Caco-2 (cell line): ENCODE measurements at regions of chr3 and their contacts with region 1.

Region 1: DNA sequence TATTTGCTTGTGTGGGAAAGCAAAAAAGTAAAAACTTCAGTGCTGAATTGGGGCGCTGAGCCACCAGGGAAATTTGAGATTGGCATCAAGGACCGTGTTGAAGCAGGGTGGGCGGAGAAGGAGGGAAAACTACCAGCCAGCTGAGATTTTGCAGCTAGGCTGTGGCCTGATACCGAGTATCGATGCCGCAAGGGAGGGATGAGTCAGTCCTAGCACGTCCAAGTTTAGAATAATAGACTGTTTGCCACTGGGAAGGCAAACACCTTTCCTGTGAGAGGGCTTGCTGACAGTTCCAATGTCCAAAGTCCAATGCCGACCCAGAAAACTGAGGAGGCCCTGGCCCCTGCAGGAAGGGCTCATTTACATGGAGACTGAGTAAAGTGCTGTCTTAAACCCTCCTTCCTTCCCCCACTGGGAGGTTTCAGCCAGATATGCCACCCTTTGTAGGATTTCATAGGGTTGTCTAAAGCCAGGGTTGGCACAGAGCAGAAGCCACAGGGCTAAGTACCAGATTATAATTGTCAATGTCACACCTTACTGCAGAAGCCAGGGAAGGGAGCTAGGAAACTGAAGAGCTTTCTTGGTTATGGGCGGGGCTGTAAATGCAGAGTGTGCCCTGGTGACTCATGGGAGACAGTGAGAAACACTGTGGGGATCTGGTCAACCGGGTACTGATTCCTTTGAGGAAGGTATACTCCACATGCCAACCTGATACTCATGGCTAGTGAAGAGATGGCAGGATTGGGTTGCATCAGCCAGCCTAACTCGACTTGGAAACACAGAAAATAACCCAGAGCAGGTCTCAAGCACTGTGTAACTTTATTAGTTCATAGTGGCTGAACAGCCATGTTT is 28.4 kb upstream of the PIK3CB start:
- DNase-seq: peak; percentile 89 to 93
- H3K4me3 ChIP-seq: no peak overlapping the region; the same call in 1 of the 2 replicates
- H3K4me3 Mint-ChIP-seq: peak overlapping the region; percentile 67
- H3K27ac Mint-ChIP-seq: peak overlapping the region; percentile 97
- H3K4me1 ChIP-seq: peaks cover 27% of the 10 kb centered on the region
- H3K4me1 Mint-ChIP-seq: peaks cover 25% of the 10 kb centered on the region
- H3K27me3 ChIP-seq: no peaks in the 10 kb centered on the region
- H3K27me3 Mint-ChIP-seq: no peaks in the 10 kb centered on the region
- CTCF ChIP-seq: no peak

Region 2: DNA sequence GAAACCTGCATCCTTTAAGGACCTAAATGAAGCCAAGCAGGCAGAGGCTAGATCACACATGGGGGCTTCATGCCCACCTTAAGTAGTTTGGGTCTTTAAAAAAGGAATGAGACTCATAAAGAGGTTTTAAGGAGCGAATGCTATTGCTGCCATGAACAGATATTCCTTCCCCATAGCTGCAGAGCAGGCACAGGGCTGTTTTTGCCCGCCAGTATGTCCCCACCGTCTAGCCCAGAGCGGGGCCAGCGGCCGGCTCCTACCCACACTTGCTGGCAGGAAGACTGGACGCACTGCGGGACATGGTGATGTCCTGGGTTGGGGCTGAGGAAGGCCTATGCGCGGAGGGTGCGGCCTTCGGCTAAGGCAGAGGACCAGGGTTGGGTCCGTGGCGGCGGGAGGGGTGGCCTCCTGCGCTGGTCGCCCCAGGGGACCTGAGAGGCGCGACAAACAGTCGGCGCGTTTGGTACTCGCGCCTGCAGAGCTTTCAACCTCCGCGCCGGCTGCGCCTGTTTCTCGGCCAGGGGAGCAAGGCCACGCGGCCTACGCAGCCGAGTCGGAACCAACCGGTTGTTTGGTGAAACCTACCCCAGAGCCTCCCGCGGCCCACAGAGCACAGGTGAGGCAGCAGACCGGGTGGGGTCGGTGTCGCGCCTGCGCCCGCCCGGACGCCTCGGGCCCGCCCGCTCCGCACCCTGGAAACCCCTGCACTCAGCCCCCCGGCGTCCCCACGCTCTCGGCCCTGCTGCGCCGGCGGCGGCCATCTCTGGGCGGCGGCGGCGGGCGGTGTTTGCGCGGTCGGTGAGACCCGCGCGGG is 254.6 kb before region 1 on chr3 and contains the start of gene FAIM:
- CTCF ChIA-PET with region 1: no interaction called
- POLR2A ChIA-PET with region 1: no interaction called
- intact Hi-C with region 1: loop called (anchors 2 kb)
- DNase-seq: peak; percentile 78 to 82
- H3K4me3 ChIP-seq: peak within 1 kb of the TSS; percentile 77
- H3K4me3 Mint-ChIP-seq: peak within 1 kb of the TSS; percentile 91
- H3K27ac Mint-ChIP-seq: peak within 1 kb of the TSS; percentile 94
- H3K4me1 ChIP-seq: no peaks in the 10 kb centered on the region; the same call in 1 of the 2 replicates
- H3K4me1 Mint-ChIP-seq: peaks cover 15% of the 10 kb centered on the region
- H3K27me3 ChIP-seq: no peaks in the 10 kb centered on the region
- H3K27me3 Mint-ChIP-seq: peaks cover 4% of the 10 kb centered on the region
- CTCF ChIP-seq: no peak
- total RNA-seq, gene FAIM: 19.4 and 22.5 TPM in 2 replicates

Region 3: DNA sequence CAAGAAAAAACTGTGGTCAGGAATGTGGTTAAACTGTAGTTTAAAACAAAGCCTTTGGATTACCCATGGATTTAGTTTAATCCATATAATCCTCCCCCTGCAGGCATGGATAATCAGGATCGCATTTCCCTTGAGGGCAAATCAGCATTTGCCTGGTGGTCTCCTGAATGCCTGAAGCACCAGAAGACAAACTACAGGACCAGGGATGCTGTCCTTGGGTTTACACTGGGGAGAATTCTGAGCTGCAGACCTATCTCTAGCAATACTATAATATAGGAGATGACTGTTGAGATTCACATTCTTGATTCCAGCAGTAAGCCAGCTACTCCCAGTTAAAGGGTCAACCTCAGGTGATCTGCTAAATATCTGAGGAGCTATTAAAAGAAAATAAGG is 39.0 kb before region 1 on chr3:
- CTCF ChIA-PET with region 1: interaction called, 3 read pairs
- POLR2A ChIA-PET with region 1: interaction called, 7 read pairs
- intact Hi-C with region 1: loop called (anchors 5 kb)
- DNase-seq: peak; percentile 37 to 47
- H3K4me3 ChIP-seq: no peak overlapping the region
- H3K4me3 Mint-ChIP-seq: no peak overlapping the region
- H3K27ac Mint-ChIP-seq: peak overlapping the region; percentile 81
- H3K4me1 ChIP-seq: peaks cover 27% of the 10 kb centered on the region
- H3K4me1 Mint-ChIP-seq: peaks cover 10% of the 10 kb centered on the region
- H3K27me3 ChIP-seq: no peaks in the 10 kb centered on the region
- H3K27me3 Mint-ChIP-seq: no peaks in the 10 kb centered on the region
- CTCF ChIP-seq: no peak

Region 4: DNA sequence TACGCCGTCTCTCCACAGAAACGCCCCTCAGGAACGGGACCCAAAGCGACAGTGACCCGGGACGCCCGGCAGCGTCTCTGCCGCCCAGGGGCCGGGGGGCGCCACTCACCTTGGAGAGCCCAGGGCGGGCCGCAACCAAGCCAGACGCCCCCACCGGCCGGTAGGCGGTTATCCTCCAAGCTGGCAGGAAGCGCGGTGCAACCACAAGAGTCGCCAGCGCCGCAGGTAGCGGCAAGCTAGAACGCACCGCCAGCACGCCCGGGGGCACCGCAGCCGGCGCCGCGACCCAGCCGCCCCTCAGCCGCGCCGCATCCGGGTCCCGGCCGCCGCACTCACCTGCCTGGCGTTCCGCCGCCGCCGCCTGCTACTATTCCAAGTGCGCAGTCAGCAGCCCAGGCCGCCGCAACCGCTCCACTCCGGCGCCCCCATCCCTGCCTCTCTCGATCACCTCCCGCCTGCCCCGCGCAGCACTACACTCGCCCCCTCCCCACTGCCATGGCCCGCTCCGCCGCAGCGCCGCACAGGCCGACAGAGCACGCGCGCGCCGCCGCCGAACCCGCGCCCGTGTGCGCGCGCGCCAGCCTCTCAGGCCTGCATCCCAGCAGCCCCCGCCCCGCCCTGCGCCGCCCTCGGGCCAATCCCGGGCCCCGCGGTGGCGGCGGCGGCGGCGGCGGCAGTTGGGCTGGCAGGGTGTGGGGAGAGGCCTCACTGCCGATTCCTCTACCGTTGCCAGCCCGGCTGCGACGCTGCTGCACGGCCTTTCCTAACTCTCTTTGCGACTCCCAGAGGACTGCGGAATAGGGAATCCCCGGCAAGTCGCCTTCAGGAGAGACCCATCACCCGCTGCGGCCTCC is 28.6 kb before region 1 on chr3 and contains the start of gene PIK3CB:
- CTCF ChIA-PET with region 1: interaction called, 4 read pairs
- POLR2A ChIA-PET with region 1: interaction called, 4 read pairs
- intact Hi-C with region 1: loop called (anchors 1 kb)
- DNase-seq: peak; percentile 88 to 95
- H3K4me3 ChIP-seq: peak within 1 kb of the TSS; percentile 87
- H3K4me3 Mint-ChIP-seq: peak within 1 kb of the TSS; percentile 86
- H3K27ac Mint-ChIP-seq: peak within 1 kb of the TSS; percentile 92
- H3K4me1 ChIP-seq: peaks cover 7% of the 10 kb centered on the region; the same call in 1 of the 2 replicates
- H3K4me1 Mint-ChIP-seq: peaks cover 4% of the 10 kb centered on the region
- H3K27me3 ChIP-seq: no peaks in the 10 kb centered on the region
- H3K27me3 Mint-ChIP-seq: no peaks in the 10 kb centered on the region
- CTCF ChIP-seq: peak in 1 of 2 experiments; percentile 69
- total RNA-seq, gene PIK3CB: 29.7 and 31.5 TPM in 2 replicates

Region 5: DNA sequence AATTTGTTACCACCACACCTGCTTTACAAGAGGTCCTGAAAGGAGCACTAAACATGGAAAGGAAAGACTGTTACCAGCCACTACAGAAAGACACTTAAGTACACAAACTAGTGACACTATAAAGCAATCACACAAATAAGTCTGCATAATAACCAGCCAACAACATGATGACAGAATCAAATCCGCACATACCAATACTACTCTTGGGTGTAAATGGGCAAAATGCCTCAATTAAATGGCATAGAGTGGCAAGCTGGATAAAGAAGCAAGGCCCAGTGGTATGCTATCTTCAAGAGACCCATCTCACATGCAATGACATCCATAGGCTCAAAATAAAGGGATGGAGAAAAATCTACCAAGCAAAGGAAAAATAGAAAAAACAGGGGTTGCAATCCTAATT is 288.4 kb after region 1 on chr3:
- CTCF ChIA-PET with region 1: no interaction called
- POLR2A ChIA-PET with region 1: no interaction called
- intact Hi-C with region 1: no loop called
- DNase-seq: no peak
- H3K4me3 ChIP-seq: no peak overlapping the region
- H3K4me3 Mint-ChIP-seq: no peak overlapping the region
- H3K27ac Mint-ChIP-seq: no peak overlapping the region
- H3K4me1 ChIP-seq: no peaks in the 10 kb centered on the region
- H3K4me1 Mint-ChIP-seq: no peaks in the 10 kb centered on the region
- H3K27me3 ChIP-seq: no peaks in the 10 kb centered on the region
- H3K27me3 Mint-ChIP-seq: peaks cover 13% of the 10 kb centered on the region
- CTCF ChIP-seq: no peak